AG04450 (cell line): ENCODE measurements at regions of chr11 and their contacts with region 1.

Region 1: DNA sequence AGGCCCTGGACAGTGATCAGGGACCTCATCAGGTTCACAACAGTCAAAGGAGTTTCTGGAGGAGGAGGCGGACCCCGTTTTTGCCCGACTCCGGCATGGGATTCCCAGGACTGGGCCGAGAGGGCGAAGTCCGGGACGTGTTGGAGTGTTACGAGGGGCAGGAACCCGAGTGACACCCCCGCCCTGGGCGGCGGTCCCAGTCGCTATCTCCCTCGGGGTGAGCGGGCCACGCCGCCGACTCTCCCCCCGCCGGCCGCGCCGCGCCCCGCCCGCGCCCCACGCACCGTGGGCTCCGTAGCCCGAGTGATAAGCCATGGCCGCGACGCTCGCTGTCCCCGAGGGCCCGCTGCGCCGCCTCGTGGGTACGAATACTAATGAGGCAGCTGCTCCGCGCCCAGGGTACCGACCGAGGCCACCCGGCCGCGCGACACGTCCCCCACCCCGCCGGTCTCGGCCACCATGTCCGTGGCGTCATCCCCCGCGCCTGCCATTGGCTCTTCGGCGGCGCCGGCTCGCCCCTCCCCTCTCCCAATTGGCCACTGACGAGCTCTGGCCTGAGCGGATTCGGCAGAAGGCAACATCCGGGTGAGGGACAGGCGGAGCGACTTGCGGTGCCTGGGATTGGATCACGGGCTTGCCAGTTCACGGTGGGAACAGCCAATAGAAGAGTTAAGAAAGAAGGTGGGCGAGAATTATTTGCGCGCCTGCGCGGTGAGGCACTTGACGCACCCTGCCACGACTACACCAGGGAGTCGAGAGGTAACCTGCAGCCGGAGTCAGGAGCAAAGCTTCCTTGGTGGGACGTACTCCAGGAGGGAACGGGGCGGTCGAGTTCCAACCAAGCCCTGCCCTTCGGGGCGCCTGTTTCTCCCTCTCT is at the start of gene YIF1A:
- DNase-seq: peak; percentile 99
- H3K4me3 ChIP-seq: peak within 1 kb of the TSS; percentile 84
- H3K27ac ChIP-seq: peak within 1 kb of the TSS; percentile 100
- H3K27me3 ChIP-seq: peaks cover 19% of the 10 kb centered on the region
- CTCF ChIP-seq: no peak
- polyA plus RNA-seq, gene YIF1A: 126 and 140 TPM in 2 replicates

Region 2: GRCh38 chr11:66268283-66268951 is 20.5 kb before region 1 on chr11 and contains the start of gene RAB1B:
- CTCF ChIA-PET with region 1: interaction called, 18 read pairs
- POLR2A ChIA-PET with region 1: interaction called, 13 read pairs
- DNase-seq: peak; percentile 98
- H3K4me3 ChIP-seq: peak within 1 kb of the TSS; percentile 91
- H3K27ac ChIP-seq: peak within 1 kb of the TSS; percentile 89
- H3K27me3 ChIP-seq: no peaks in the 10 kb centered on the region
- CTCF ChIP-seq: no peak
- polyA plus RNA-seq, gene RAB1B: 127 and 183 TPM in 2 replicates

Region 3: GRCh38 chr11:66317723-66318599 is 29.1 kb after region 1 on chr11:
- CTCF ChIA-PET with region 1: interaction called, 3 read pairs
- POLR2A ChIA-PET with region 1: interaction called, 25 read pairs
- DNase-seq: peak; percentile 74
- H3K4me3 ChIP-seq: no peak overlapping the region; the same call in 1 of the 2 replicates
- H3K27ac ChIP-seq: peak overlapping the region; percentile 99
- H3K27me3 ChIP-seq: no peaks in the 10 kb centered on the region
- CTCF ChIP-seq: no peak

Region 4: DNA sequence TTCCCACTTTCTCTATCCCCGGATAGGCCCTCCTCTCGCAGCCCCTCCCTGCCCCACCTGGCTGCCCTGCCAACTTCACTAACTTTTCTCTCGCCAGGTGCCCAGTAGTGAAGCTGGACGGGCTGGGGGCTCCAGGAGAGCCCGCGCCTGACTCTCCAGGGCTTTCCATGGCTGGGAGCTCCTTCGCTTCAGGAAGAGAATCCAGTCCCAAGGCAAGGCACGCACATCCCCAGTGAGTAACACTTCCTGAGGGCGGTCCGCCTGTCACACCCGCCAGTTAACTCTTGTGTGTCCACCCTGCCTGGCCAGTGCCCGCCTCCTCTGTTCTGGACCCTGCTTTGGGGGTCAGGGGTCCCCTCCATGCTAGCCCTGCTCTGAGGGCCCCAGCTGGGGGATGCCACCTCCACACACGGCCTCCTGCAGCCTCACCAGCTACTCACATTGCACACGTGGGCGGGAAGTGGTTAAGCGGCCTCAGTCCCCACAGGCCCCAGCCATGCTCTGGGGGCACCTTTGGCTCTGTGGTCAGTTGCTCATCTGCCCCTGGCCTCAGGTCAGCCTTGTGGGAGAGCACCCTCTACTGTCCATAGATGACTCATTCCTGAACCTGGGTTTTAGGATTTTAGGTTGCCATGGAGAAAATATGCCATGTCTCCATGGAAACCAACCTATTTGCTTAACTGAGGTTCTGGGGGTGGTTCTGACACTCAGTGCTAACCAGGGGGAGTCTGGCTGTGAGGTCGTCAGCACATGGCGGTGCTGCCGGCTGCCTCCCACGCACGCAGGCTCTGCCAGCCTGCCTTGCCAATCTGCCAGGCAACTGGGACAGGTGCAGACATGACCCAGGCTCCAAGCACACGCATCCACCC is 47.6 kb after region 1 on chr11 and contains the start of gene RIN1:
- CTCF ChIA-PET with region 1: interaction called, 4 read pairs
- POLR2A ChIA-PET with region 1: interaction called, 21 read pairs
- DNase-seq: peak; percentile 97
- H3K4me3 ChIP-seq: peak within 1 kb of the TSS; percentile 85
- H3K27ac ChIP-seq: peak within 1 kb of the TSS; percentile 97
- H3K27me3 ChIP-seq: no peaks in the 10 kb centered on the region
- CTCF ChIP-seq: peak; percentile 24; the same call in 1 of the 2 replicates
- polyA plus RNA-seq, gene RIN1: 6.7 and 9.0 TPM in 2 replicates

Region 5: DNA sequence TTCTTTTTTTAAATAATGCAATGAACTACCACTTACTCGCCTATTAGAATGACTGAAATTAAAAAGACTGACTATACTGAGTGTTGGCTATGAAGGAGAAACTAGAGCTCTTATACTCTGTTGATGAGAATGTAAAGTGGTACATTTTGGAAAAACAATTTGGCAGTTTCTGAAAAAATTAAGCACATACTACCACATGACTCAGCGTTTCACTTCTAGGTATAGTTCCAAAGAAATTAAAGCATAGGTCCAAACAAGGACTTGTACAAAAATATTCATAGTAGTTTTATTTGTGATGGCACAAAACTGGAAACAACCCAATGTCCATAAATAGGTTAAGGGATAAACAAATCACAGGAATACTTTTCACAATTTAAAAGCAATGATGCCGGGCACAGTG is 105.0 kb after region 1 on chr11:
- CTCF ChIA-PET with region 1: interaction called, 5 read pairs
- POLR2A ChIA-PET with region 1: interaction called, 12 read pairs
- DNase-seq: no peak
- H3K4me3 ChIP-seq: no peak overlapping the region
- H3K27ac ChIP-seq: no peak overlapping the region
- H3K27me3 ChIP-seq: peaks cover 8% of the 10 kb centered on the region
- CTCF ChIP-seq: no peak